Dorsolateral prefrontal cortex (tissue), 120 donors: ENCODE measurements at regions of chr9 and their contacts with region 1.

Region 1: GRCh38 chr9:15277400-15278090 is 29.5 kb downstream of the TTC39B start:
- DNase-seq: peak in 1 of 10 donors; percentile 6
- H3K4me3 ChIP-seq: no peak overlapping the region
- H3K27ac ChIP-seq: peak overlapping the region in 1 of 59 donors; percentile 33
- H3K27me3 ChIP-seq: no peaks in the 10 kb centered on the region
- CTCF ChIP-seq: peak; percentile 32 to 85 (median 62)

Region 2: DNA sequence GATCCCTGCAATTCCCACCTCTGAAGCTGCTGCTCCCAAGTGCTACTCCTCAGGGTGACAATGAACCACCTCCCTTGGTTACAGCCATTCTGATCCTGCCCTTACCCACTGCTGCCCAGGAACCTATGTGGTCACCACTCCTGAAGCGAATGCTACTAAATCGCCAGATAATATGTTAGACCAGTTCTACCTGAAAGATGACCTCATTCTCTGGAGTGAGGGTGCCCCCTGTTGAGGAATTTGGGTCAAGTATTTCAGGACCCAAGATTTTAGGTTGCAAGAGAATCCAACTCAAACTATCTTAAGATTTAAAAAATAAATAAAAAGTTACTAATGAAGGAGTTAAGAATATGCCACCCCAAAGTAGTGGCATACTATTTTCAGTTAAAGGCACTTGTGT is 139.3 kb after region 1 on chr9:
- intact Hi-C with region 1: loop called in 1 of 2 experiments (anchors 2 kb)
- DNase-seq: peak in 1 of 10 donors; percentile 15
- H3K4me3 ChIP-seq: no peak overlapping the region
- H3K27ac ChIP-seq: no peak overlapping the region
- H3K27me3 ChIP-seq: no peaks in the 10 kb centered on the region
- CTCF ChIP-seq: peak in 47 of 56 donors; percentile 13 to 66 (median 37)

Region 3: DNA sequence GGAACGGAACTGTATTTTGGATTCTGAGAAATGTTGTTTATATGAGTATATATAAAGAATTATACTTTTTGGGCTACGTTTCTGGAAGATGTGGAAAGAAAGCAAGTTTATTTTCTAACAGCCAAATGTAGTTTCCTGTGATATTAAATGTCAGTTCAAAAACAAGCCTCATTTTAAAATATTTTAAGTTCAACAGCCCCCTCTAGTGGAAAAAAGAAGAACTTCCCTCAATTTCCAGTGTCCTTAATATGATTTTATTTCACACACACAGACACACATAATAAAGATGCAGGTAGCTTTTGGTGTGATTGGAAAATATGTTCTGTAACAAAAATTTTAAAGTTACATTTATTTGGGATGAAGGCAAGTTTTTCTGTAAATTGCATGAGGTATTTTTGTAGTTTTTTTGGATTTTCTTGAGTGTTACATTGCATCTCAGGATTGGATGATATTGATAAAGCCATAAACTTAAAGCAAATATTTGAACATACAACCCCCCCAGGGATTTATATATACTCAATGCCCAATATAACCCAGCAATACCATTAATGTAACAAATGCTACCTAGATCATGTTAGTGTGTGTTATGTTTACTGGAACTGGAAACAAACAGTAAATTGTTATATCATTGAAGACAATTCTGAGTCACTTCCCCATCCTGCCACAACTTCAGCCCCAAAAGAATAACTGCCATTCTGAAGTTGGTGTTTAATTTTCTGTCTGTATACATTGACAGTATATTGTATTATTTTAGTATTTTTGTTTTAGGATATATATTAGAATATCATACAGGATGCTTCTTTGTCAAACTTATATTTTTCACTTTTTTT is 329.3 kb after region 1 on chr9:
- intact Hi-C with region 1: loop called (anchors 5 to 10 kb)
- DNase-seq: no peak
- H3K4me3 ChIP-seq: no peak overlapping the region
- H3K27ac ChIP-seq: no peak overlapping the region
- H3K27me3 ChIP-seq: no peaks in the 10 kb centered on the region
- CTCF ChIP-seq: peak; percentile 78 to 98 (median 86)